ENCODE measurements at regions of chr3 and their contacts with region 1.

Region 1: GRCh38 chr3:177337541-177338331 is 140.5 kb upstream of the TBL1XR1 start:
- DNase-seq: peak; percentile 66
- H3K4me3 Mint-ChIP-seq: peak overlapping the region; percentile 51
- H3K27ac Mint-ChIP-seq: peak overlapping the region; percentile 95
- H3K4me1 Mint-ChIP-seq: peaks cover 65% of the 10 kb centered on the region
- H3K27me3 Mint-ChIP-seq: peaks cover 8% of the 10 kb centered on the region

Region 2: DNA sequence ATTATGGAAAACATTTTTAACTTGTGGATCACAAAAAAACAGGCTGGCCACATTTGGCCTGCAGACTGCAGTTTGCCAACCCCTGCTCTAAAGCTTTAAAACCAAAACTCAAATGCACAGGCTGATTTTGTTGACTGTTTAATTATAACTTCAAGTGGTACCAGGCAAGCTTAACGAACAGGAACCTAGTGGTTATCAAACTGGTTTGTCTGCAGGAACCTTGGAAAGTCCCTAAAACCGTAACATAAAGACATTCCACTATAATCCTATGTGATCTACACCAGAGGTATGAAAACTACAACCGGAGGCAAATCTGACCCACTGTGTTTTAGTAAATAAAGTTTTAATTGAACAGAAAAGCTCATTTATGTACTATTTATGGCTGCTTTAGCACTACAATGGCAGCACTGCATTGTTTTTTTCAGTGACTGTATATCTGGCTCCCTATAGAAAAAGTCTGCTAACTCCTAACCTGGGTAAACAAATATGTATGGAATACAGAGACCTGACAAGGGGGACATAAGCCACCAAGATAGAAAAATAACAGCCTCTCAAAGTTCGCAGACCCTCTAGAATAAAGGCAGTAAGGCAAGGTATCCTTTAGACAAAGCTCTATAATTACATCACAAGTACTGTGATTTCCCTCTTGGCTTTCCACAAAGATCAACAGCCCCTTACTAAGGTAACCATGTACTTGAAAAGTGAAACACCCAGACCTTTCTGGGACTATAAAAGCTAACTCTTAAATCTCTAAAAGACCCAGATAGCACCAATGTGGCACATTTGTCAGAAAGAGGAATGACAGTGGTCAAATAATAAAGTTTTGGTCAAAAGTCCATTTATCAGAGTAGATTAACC is 192.6 kb before region 1 on chr3:
- intact Hi-C with region 1: loop called (anchors 5 kb)
- DNase-seq: peak; percentile 35
- H3K4me3 Mint-ChIP-seq: peak overlapping the region; percentile 61
- H3K27ac Mint-ChIP-seq: peak overlapping the region; percentile 93
- H3K4me1 Mint-ChIP-seq: peaks cover 69% of the 10 kb centered on the region
- H3K27me3 Mint-ChIP-seq: no peaks in the 10 kb centered on the region

Region 3: GRCh38 chr3:177314897-177315296 is 22.8 kb before region 1 on chr3:
- intact Hi-C with region 1: loop called (anchors 1 kb)
- DNase-seq: no peak
- H3K4me3 Mint-ChIP-seq: no peak overlapping the region
- H3K27ac Mint-ChIP-seq: no peak overlapping the region
- H3K4me1 Mint-ChIP-seq: peaks cover 15% of the 10 kb centered on the region
- H3K27me3 Mint-ChIP-seq: peaks cover 3% of the 10 kb centered on the region

Region 4: GRCh38 chr3:177405191-177405672 is 67.5 kb after region 1 on chr3:
- intact Hi-C with region 1: no loop called
- DNase-seq: no peak
- H3K4me3 Mint-ChIP-seq: no peak overlapping the region
- H3K27ac Mint-ChIP-seq: no peak overlapping the region
- H3K4me1 Mint-ChIP-seq: no peaks in the 10 kb centered on the region
- H3K27me3 Mint-ChIP-seq: no peaks in the 10 kb centered on the region

Region 5: GRCh38 chr3:177419904-177420601 is 82.3 kb after region 1 on chr3:
- intact Hi-C with region 1: loop called (anchors 1 kb)
- DNase-seq: no peak
- H3K4me3 Mint-ChIP-seq: peak overlapping the region; percentile 19
- H3K27ac Mint-ChIP-seq: peak overlapping the region; percentile 53
- H3K4me1 Mint-ChIP-seq: peaks cover 26% of the 10 kb centered on the region
- H3K27me3 Mint-ChIP-seq: peaks cover 1% of the 10 kb centered on the region

Region 6: GRCh38 chr3:177452474-177453450 is 115.0 kb after region 1 on chr3:
- intact Hi-C with region 1: no loop called
- DNase-seq: no peak
- H3K4me3 Mint-ChIP-seq: no peak overlapping the region
- H3K27ac Mint-ChIP-seq: no peak overlapping the region
- H3K4me1 Mint-ChIP-seq: peaks cover 9% of the 10 kb centered on the region
- H3K27me3 Mint-ChIP-seq: no peaks in the 10 kb centered on the region

Measured in activated T-helper 1 cell treated with anti-CD3 and anti-CD28 coated beads, Interleukin-12 subunit alpha, Interleukin-12 subunit beta, Interleukin-2, Interleukin-4 antibody, amounts not matched to agents 30 ng/mL and 10 ng/mL and 1 ng/mL, durations not matched to agents 14 hours and 24 hours and 36 hours (primary cell).